ENCODE measurements at regions of chr9 and their contacts with region 1.

Region 1: GRCh38 chr9:111759762-111760639 is 34.7 kb downstream of the SHOC1 start:
- DNase-seq: peak in 12 of 14 experiments; percentile 6 to 81 (median 32)
- ATAC-seq: peak; percentile 85
- H3K4me3 ChIP-seq: no peak overlapping the region
- H3K4me3 Mint-ChIP-seq: no peak overlapping the region
- H3K27ac ChIP-seq: no peak overlapping the region
- H3K27ac Mint-ChIP-seq: no peak overlapping the region
- H3K4me1 ChIP-seq: no peaks in the 10 kb centered on the region
- H3K4me1 Mint-ChIP-seq: peaks cover 5% of the 10 kb centered on the region
- H3K27me3 ChIP-seq: no peaks in the 10 kb centered on the region
- H3K27me3 Mint-ChIP-seq: no peaks in the 10 kb centered on the region
- CTCF ChIP-seq: peak; percentile 88

Region 2: DNA sequence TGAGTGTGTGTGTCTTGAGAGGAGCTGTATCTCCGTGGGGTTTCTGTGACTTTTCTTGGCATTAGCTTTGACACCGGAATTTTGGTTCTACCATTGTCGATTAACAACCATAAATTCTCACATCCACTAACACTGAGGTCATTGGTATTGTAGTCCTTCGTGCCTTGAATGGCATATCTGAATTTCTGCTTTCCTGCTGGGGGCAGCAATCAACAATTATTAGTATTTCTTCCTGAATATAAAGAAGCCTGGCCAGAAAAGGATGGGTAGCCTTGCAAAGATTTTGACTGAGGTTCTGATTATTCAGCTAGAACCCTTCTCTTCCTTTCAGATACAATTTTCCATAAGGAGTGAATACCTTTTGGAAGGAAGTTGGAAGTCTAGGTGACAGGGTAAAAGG is 68.2 kb after region 1 on chr9:
- CTCF ChIA-PET with region 1: no interaction called
- POLR2A ChIA-PET with region 1: no interaction called
- intact Hi-C with region 1: loop called in 1 of 2 experiments (anchors 5 kb)
- DNase-seq: peak in 4 of 14 experiments; percentile 16 to 52 (median 37)
- ATAC-seq: no peak
- H3K4me3 ChIP-seq: no peak overlapping the region
- H3K4me3 Mint-ChIP-seq: no peak overlapping the region
- H3K27ac ChIP-seq: no peak overlapping the region
- H3K27ac Mint-ChIP-seq: no peak overlapping the region
- H3K4me1 ChIP-seq: no peaks in the 10 kb centered on the region
- H3K4me1 Mint-ChIP-seq: no peaks in the 10 kb centered on the region
- H3K27me3 ChIP-seq: no peaks in the 10 kb centered on the region
- H3K27me3 Mint-ChIP-seq: no peaks in the 10 kb centered on the region
- CTCF ChIP-seq: peak; percentile 41

Region 3: GRCh38 chr9:111975709-111976108 is 215.7 kb after region 1 on chr9:
- CTCF ChIA-PET with region 1: no interaction called
- POLR2A ChIA-PET with region 1: no interaction called
- intact Hi-C with region 1: loop called (anchors 1 to 5 kb)
- DNase-seq: peak in 6 of 14 experiments; percentile 12 to 51 (median 37)
- ATAC-seq: no peak
- H3K4me3 ChIP-seq: no peak overlapping the region
- H3K4me3 Mint-ChIP-seq: no peak overlapping the region
- H3K27ac ChIP-seq: no peak overlapping the region
- H3K27ac Mint-ChIP-seq: no peak overlapping the region
- H3K4me1 ChIP-seq: peaks cover 5% of the 10 kb centered on the region
- H3K4me1 Mint-ChIP-seq: peaks cover 12% of the 10 kb centered on the region
- H3K27me3 ChIP-seq: no peaks in the 10 kb centered on the region
- H3K27me3 Mint-ChIP-seq: no peaks in the 10 kb centered on the region
- CTCF ChIP-seq: no peak

Region 4: DNA sequence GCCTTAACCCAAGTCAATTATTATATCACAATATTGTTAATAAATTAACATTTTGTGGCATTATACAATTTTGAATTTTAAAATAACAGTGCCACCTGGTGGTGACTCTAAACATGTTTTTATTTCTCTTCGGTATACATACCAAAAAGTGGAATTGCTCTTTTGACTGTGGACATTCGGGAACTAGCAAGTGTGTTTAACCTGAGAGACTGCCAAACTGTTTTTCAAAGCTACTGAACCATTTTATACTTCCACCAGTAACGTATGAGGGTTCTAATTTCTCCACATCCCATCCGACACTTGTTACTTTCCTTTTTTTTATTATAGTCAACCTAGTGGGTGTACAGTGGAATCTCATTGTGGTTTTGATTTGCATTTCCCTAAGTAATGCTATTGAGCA is 601.6 kb after region 1 on chr9:
- CTCF ChIA-PET with region 1: no interaction called
- POLR2A ChIA-PET with region 1: no interaction called
- intact Hi-C with region 1: loop called (anchors 2 to 5 kb)
- DNase-seq: peak in 4 of 14 experiments; percentile 48 to 74 (median 64)
- ATAC-seq: no peak
- H3K4me3 ChIP-seq: no peak overlapping the region
- H3K4me3 Mint-ChIP-seq: no peak overlapping the region
- H3K27ac ChIP-seq: no peak overlapping the region
- H3K27ac Mint-ChIP-seq: no peak overlapping the region
- H3K4me1 ChIP-seq: no peaks in the 10 kb centered on the region
- H3K4me1 Mint-ChIP-seq: peaks cover 4% of the 10 kb centered on the region
- H3K27me3 ChIP-seq: no peaks in the 10 kb centered on the region
- H3K27me3 Mint-ChIP-seq: no peaks in the 10 kb centered on the region
- CTCF ChIP-seq: peak; percentile 86

Measured in CD4-positive, alpha-beta T cell (primary cell).